HEK293 (cell line): ENCODE measurements at regions of chr1 and their contacts with region 1.

Region 1: GRCh38 chr1:180188091-180188506 is 33.4 kb downstream of the QSOX1 start:
- H3K4me3 ChIP-seq: no peak overlapping the region
- H3K27ac ChIP-seq: no peak overlapping the region
- H3K4me1 ChIP-seq: no peaks in the 10 kb centered on the region
- CTCF ChIP-seq: peak; percentile 92

Region 2: GRCh38 chr1:180168786-180169639 is 19.1 kb before region 1 on chr1:
- CTCF ChIA-PET with region 1: interaction called, 15 read pairs
- POLR2A ChIA-PET with region 1: no interaction called
- H3K4me3 ChIP-seq: no peak overlapping the region
- H3K27ac ChIP-seq: no peak overlapping the region
- H3K4me1 ChIP-seq: peaks cover 11% of the 10 kb centered on the region
- CTCF ChIP-seq: peak; percentile 49; the same call in 1 of the 2 replicates

Region 3: GRCh38 chr1:180231506-180231921 is 43.4 kb after region 1 on chr1:
- CTCF ChIA-PET with region 1: interaction called, 14 read pairs
- POLR2A ChIA-PET with region 1: interaction called, 5 read pairs
- H3K4me3 ChIP-seq: peak overlapping the region; percentile 69
- H3K27ac ChIP-seq: peak overlapping the region; percentile 76; the same call in 1 of the 2 replicates
- H3K4me1 ChIP-seq: no peaks in the 10 kb centered on the region
- CTCF ChIP-seq: peak; percentile 23; the same call in 1 of the 2 replicates

Region 4: DNA sequence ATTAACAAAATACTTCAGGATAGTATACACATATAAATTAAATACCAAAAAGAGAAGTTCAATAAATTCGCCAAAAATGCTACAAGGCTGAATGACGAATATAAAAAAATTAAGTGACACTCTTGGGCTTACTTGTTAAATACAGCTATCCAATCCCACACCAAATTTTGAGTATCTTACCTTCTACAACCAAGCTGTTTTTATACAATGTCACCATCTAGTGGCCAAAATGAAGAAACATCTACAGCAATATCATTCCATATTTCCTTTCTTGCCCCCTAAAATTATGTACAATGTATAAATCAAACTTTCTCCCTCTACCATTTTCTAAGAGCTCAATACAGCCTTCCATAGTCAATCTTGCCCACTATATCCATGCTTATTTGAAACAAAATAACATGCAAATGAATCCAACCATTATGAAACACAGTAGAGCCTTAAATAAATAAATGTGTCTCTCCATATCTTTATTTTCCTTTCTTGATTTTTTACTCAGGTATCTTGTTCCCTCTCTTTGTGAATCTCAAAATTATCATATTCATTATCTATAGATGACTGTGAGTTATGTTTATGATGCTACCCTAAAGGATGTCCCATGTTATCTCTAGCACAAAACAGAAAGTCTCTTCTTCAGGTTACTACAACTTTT is 228.0 kb after region 1 on chr1:
- CTCF ChIA-PET with region 1: interaction called, 35 read pairs
- POLR2A ChIA-PET with region 1: no interaction called
- H3K4me3 ChIP-seq: no peak overlapping the region
- H3K27ac ChIP-seq: no peak overlapping the region
- H3K4me1 ChIP-seq: no peaks in the 10 kb centered on the region
- CTCF ChIP-seq: peak; percentile 51; the same call in 1 of the 2 replicates

Region 5: GRCh38 chr1:180482425-180483275 is 294.6 kb after region 1 on chr1:
- CTCF ChIA-PET with region 1: interaction called, 45 read pairs
- POLR2A ChIA-PET with region 1: no interaction called
- H3K4me3 ChIP-seq: no peak overlapping the region
- H3K27ac ChIP-seq: no peak overlapping the region
- H3K4me1 ChIP-seq: no peaks in the 10 kb centered on the region
- CTCF ChIP-seq: peak; percentile 62; the same call in 1 of the 2 replicates